Esophagus muscularis mucosa (tissue), 4 donors: ENCODE measurements at regions of chr5 and their contacts with region 1.

Region 1: DNA sequence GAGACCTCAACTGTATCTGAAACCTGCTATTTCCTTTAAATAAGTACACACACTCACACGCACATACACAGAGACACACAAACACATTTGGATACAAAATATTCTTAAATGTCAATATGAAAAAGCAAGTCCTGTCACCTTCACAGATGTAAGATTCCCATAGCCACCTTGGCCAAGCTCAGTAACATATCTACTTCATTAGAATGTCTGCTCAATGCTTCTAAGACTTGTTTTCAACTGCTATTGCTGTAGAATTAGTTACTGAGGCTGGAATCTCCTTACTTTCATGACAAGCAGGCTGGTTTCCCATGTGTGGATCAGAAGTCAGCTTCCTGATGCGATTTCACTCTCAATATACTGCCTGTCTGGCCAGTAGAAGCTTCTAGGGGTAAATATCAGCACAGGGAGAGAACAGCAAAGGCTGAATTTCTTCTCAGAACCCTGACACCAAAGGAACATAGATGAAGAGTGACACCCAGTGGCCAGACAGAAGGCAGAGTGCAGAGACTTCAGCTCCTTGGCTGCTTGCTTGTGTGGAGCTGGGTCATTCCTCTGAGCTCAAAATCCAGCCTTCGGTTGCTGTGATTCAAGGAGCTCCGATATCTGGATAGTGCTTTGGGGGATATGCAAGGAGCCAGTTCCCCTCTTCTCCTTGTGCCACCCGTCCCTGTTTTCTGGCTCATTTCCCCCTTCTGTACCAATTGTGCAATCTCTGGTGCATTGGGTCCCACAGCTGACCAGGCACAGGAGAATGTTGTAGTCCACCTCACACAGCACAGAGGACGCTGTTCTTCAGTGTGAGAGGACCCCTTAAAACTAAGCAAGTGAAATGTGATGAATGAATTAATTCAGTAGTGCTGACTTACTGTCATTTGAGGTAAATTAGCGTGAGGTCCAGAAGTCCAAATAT is 26.6 kb upstream of the ABLIM3 start:
- DNase-seq: no peak
- H3K4me3 ChIP-seq: no peak overlapping the region
- H3K27ac ChIP-seq: no peak overlapping the region
- H3K4me1 ChIP-seq: peaks cover 0 to 6% (median 0%) of the 10 kb centered on the region in 4 donors
- H3K27me3 ChIP-seq: no peaks in the 10 kb centered on the region
- CTCF ChIP-seq: peak; percentile 47 to 73 (median 56)
- EP300 ChIP-seq: no peak
- POLR2A ChIP-seq: no peak

Region 2: DNA sequence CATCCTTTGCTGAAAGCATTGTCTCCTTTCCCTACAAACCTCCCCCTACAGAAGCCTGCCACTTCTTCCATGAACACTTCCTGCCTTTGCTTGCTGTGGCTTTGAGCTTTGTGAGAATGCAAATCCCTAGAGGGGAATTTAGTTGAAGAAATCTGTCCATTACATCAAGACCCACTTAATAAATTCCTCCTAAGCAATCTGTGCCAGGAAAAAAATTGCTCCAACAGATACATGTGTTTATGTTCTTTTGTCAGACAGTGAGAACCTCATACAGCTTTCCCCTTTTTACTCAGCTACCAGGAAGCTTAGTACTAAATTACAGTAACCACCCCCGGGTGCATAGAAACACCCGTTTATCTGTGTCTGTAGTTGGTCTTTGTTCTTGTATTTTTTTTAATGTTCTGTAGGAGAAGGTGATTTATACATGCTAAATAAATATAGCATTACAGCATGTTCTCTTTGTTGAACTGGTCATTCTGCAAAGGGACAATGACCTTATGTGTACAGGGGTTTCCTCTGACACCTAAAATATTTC is 95.7 kb before region 1 on chr5:
- intact Hi-C with region 1: loop called (anchors 10 kb)
- DNase-seq: no peak
- H3K4me3 ChIP-seq: no peak overlapping the region
- H3K27ac ChIP-seq: no peak overlapping the region
- H3K4me1 ChIP-seq: peaks cover 0 to 24% (median 12%) of the 10 kb centered on the region in 4 donors
- H3K27me3 ChIP-seq: no peaks in the 10 kb centered on the region
- CTCF ChIP-seq: no peak
- EP300 ChIP-seq: no peak
- POLR2A ChIP-seq: no peak